ENCODE measurements at regions of chr4 and their contacts with region 1.

Region 1: GRCh38 chr4:140756319-140757231 is at the start of gene TBC1D9:
- DNase-seq: peak; percentile 75
- H3K4me3 ChIP-seq: peak within 1 kb of the TSS; percentile 73
- H3K27ac ChIP-seq: no peak within 1 kb of the TSS
- H3K4me1 ChIP-seq: peaks cover 30% of the 10 kb centered on the region
- CTCF ChIP-seq: peak; percentile 33
- total RNA-seq, gene TBC1D9: 1.0 and 1.6 TPM in 2 replicates

Region 2: DNA sequence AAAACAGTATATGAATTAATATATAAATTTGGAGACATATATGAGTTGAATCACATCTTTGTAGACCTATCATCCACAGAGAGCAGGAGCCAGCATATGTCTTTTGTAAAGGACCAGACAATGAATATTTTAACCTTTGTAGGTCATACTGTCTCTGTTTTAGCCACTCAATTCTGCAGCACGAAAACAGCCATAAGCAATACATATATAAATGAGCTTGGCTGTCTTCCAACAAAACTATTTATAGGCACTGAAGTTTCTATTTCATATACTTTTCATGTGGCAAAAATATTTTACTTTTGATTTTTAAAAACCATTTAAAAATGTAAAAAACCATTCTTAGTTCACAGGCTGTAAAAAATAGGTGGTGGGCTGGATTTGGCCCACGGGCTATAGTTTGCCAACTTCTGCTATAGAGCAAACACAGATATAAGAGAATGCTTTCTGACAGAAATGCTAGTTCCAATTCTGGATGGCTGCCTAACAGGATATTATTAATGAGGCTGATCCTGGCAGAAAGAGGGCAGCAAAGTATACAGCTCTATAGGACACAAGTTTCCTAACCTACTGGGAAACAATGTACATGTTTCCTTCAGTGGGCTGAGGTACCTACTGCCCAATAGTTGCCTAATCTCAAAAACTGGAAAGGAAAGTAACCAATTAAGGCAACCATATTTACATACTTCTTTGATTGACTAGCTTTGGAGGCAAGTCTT is 129.8 kb before region 1 on chr4:
- CTCF ChIA-PET with region 1: no interaction called
- POLR2A ChIA-PET with region 1: no interaction called
- intact Hi-C with region 1: no loop called
- DNase-seq: no peak
- H3K4me3 ChIP-seq: no peak overlapping the region
- H3K27ac ChIP-seq: no peak overlapping the region
- H3K4me1 ChIP-seq: peaks cover 41% of the 10 kb centered on the region
- CTCF ChIP-seq: peak; percentile 39; the same call in 1 of the 2 replicates

Region 3: DNA sequence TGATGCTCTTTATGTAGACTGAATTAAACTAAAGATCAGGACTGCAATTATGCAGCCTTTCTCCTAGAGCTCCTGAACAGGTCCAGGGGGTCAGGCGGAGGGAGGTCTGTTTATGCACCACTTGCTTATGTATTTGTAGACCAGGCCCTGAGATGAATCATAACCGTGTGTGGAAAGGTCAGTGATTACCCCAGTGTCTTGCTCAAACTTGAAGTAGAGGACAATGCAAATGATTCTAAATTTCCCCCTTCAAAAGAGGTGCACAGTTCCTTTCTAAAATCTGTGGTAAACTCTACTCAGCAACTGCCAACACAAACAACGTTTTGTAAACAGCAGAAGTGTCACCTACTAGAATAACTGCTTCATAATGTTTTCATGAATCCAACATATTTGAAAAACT is 12.6 kb after region 1 on chr4:
- CTCF ChIA-PET with region 1: interaction called, 3 read pairs
- POLR2A ChIA-PET with region 1: interaction called, 11 read pairs
- intact Hi-C with region 1: no loop called
- DNase-seq: no peak
- H3K4me3 ChIP-seq: no peak overlapping the region
- H3K27ac ChIP-seq: no peak overlapping the region
- H3K4me1 ChIP-seq: peaks cover 6% of the 10 kb centered on the region
- CTCF ChIP-seq: no peak

Region 4: GRCh38 chr4:140790765-140791164 is 34.2 kb after region 1 on chr4:
- CTCF ChIA-PET with region 1: interaction called, 4 read pairs
- POLR2A ChIA-PET with region 1: interaction called, 7 read pairs
- intact Hi-C with region 1: loop called (anchors 5 kb)
- DNase-seq: peak; percentile 94
- H3K4me3 ChIP-seq: peak overlapping the region; percentile 12
- H3K27ac ChIP-seq: peak overlapping the region; percentile 47
- H3K4me1 ChIP-seq: peaks cover 46% of the 10 kb centered on the region
- CTCF ChIP-seq: no peak

Region 5: DNA sequence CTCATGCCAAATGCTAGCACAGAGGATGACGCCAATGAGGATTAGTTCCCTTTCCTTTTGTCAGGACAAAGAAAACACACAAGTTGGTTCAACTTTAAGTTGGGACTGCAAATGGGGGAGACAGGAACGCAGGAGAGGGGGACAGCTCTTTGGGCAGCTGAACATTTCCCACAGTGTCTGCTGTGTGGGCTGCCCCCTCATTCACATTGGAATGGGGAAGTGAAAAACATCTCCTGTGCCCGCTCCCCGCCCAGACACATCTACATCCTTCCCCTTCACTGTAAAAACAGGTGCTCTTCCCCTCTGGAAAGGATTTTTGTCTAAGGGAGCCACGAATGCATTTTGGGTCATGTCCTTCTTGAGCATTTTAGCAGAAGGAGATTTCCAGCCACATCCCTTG is 44.1 kb after region 1 on chr4:
- CTCF ChIA-PET with region 1: no interaction called
- POLR2A ChIA-PET with region 1: interaction called, 11 read pairs
- intact Hi-C with region 1: loop called (anchors 5 kb)
- DNase-seq: peak; percentile 62
- H3K4me3 ChIP-seq: no peak overlapping the region
- H3K27ac ChIP-seq: no peak overlapping the region
- H3K4me1 ChIP-seq: peaks cover 64% of the 10 kb centered on the region
- CTCF ChIP-seq: no peak

Region 6: DNA sequence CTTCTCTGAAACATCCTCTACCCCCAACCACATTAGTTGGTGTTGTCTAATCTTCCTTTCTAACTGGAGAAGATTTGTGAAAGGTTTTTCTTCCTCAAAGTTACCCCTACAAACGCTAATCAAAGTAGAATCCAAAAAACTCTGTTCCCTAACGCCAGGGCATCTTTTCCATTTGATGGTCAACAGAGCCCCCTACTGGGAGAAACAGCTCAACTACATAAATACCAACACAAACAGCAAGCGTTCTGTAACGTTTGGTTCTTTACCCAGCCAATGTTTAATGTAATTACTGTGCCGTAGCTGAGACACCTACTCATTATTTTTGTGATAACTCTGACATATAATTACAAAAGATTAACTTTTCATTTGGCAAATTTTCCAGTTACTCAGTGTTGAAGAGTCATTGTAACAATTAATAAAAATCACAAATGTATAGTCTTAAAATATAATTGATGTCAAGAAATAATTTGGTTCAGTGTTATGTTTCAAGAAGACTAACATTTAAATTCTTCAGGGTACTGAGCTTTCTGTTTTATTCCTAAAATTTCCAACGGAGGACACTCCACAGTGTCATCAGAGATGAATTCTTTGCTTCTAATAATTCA is 94.6 kb after region 1 on chr4:
- CTCF ChIA-PET with region 1: no interaction called
- POLR2A ChIA-PET with region 1: interaction called, 4 read pairs
- intact Hi-C with region 1: loop called (anchors 2 kb)
- DNase-seq: peak; percentile 86
- H3K4me3 ChIP-seq: no peak overlapping the region
- H3K27ac ChIP-seq: no peak overlapping the region
- H3K4me1 ChIP-seq: peaks cover 27% of the 10 kb centered on the region
- CTCF ChIP-seq: peak; percentile 100

Measured in OCI-LY7 (cell line).